ENCODE measurements at regions of chr1 and their contacts with region 1.

Region 1: DNA sequence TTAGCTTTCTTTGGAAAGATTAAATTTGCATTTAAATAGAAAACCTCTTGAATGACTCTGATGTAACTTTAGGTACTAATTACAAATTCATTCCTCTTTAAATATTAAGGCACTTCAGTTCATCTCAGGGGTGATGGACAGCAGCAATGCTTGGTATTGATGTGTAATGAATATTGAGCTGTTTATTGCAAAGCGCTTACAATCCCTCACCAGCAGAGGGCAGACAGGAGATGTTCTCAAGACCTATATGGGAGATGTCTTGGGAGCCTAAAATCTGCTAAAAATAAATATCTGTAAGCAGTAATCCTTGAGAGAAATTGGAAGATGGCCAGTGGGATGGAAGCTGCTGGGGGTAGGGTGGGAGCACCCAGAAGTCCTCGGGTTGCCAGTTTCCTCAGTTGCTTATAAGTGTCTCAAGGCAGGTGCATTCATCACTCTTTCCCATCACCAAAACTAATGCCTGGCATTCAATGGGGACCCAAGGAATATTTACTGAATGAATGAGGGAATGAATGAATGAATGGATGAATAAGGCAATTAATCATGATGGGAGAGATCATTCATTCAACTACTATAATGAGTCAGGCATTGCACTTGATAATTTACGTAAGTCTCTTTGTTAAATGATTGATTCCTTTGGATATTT is 2.3 kb downstream of the KLHDC8A start:
- DNase-seq: peak in 1 of 2 experiments; percentile 69
- H3K4me3 ChIP-seq: no peak overlapping the region
- H3K27ac ChIP-seq: no peak overlapping the region
- H3K4me1 ChIP-seq: peaks cover 22 to 47% (median 31%) of the 10 kb centered on the region in 4 experiments
- H3K27me3 ChIP-seq: no peaks in the 10 kb centered on the region
- CTCF ChIP-seq: peak in 2 of 3 experiments; percentile 75 to 84; a peak in 3 of 4 replicates
- EP300 ChIP-seq: no peak
- POLR2A ChIP-seq: no peak
- RAD21 ChIP-seq: peak; percentile 56 to 66

Region 2: DNA sequence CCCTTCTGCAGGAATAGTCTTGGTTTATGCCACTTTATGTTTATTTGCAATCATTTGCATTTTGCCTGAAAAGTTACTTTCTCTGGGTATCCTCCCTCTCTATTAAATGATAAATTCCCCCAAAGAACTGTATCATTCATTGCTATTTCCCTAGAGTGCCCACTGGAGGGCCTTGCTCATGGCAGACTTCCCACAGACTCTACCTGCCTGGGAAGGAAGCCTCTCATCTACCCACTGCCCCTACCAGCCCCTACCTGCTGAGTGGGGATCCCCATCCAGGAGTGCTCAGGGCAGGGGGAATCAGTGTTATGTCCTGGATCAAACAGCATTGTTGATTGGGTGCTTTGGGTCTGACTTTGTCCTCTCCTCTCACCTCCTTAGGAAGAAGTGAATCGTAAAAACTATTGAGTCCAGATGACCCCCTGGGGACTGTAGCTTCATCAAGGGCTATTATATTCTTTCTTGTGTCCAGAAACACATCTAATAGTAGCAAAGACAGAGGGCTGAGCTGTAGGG is 662.0 kb before region 1 on chr1:
- CTCF ChIA-PET with region 1: no interaction called
- POLR2A ChIA-PET with region 1: no interaction called
- DNase-seq: peak in 1 of 2 experiments; percentile 53
- H3K4me3 ChIP-seq: peak overlapping the region in 1 of 4 experiments; percentile 12; a peak in 1 of 8 replicates
- H3K27ac ChIP-seq: no peak overlapping the region
- H3K4me1 ChIP-seq: peaks cover 1 to 4% (median 2%) of the 10 kb centered on the region in 4 experiments; a peak in 5 of 7 replicates
- H3K27me3 ChIP-seq: peaks cover 0 to 5% (median 5%) of the 10 kb centered on the region in 4 experiments; a peak in 3 of 7 replicates
- CTCF ChIP-seq: peak; percentile 5 to 30 (median 23)
- EP300 ChIP-seq: no peak
- POLR2A ChIP-seq: no peak
- RAD21 ChIP-seq: peak; percentile 41 to 54; a peak in 3 of 4 replicates

Region 3: DNA sequence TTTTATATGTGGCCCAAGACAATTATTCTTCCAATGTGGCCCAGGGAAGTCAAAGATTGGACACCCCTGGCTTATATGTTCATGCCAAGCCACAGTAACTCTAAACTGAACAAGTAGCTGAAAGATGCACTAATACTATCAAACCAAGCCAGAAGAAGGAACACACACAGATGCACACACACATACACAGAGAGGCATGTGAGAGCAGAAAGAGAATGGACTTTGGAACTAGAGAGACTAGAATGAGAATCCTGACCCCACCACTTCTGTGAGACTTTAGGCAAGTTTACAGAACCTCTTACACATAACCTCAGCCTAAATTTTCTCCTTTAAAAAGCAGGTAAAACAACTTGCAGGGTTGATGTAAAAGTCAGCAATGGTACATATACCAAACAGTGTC is 259.0 kb before region 1 on chr1:
- CTCF ChIA-PET with region 1: no interaction called
- POLR2A ChIA-PET with region 1: no interaction called
- DNase-seq: no peak
- H3K4me3 ChIP-seq: no peak overlapping the region
- H3K27ac ChIP-seq: no peak overlapping the region
- H3K4me1 ChIP-seq: no peaks in the 10 kb centered on the region
- H3K27me3 ChIP-seq: no peaks in the 10 kb centered on the region
- CTCF ChIP-seq: no peak
- EP300 ChIP-seq: no peak
- POLR2A ChIP-seq: no peak
- RAD21 ChIP-seq: no peak

Region 4: DNA sequence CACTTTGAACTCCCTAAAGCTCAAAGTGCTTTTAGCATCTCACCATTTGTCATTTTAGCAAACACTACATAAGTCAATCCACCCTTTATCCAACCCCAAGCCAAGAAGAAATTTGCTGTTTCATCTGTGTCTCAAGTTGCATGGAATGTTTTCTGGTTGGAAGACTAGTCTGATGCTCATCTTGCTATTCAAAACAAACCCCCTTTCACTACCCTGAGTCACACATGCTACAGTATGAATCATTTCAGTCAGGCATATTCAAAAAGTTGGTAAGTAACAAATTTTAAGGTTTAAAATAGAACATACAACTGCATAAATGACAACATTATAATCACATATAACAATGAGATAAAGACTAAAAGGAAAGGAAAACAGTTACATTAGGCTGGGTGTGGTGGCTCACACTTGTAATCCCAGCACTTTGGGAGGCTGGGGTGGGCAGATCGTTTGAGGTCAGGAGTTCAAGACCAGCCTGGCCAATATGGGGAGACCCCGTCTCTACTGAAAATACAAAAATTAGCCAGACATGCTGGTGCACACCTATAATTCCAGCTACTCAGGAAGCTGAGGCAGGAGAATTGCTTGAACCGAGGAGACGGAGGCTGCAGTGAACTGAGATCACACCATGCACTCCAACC is 181.5 kb before region 1 on chr1:
- CTCF ChIA-PET with region 1: no interaction called
- POLR2A ChIA-PET with region 1: no interaction called
- DNase-seq: no peak
- H3K4me3 ChIP-seq: no peak overlapping the region
- H3K27ac ChIP-seq: no peak overlapping the region
- H3K4me1 ChIP-seq: no peaks in the 10 kb centered on the region
- H3K27me3 ChIP-seq: no peaks in the 10 kb centered on the region
- CTCF ChIP-seq: no peak
- EP300 ChIP-seq: no peak
- POLR2A ChIP-seq: no peak
- RAD21 ChIP-seq: no peak

Region 5: GRCh38 chr1:205304695-205305070 is 49.7 kb before region 1 on chr1:
- CTCF ChIA-PET with region 1: no interaction called
- POLR2A ChIA-PET with region 1: no interaction called
- DNase-seq: no peak
- H3K4me3 ChIP-seq: no peak overlapping the region
- H3K27ac ChIP-seq: no peak overlapping the region
- H3K4me1 ChIP-seq: peaks cover 11 to 27% (median 22%) of the 10 kb centered on the region in 4 experiments
- H3K27me3 ChIP-seq: no peaks in the 10 kb centered on the region
- CTCF ChIP-seq: no peak
- EP300 ChIP-seq: no peak
- POLR2A ChIP-seq: no peak
- RAD21 ChIP-seq: no peak

Region 6: DNA sequence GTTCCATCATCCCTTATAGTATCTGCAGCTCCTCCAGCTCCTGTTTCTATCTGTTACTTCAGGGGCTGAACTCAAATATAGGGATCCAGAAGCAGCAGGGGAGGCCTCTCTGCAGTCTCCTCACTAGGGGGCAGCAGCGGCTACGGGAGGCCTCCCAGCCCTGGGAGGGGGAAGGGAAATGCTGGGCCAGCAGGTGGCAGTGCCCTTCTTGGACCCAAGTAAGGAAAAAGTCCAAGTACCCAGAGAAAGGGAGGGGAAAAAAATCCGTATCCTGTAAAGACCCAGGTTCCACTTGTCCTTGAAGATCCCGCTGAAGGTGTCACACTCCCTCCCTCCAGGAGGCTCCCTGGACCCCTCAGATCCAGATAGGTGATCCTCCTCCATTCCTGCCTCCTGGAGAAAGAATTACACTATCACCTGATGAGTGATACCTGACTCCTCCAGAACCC is 18.7 kb before region 1 on chr1:
- CTCF ChIA-PET with region 1: interaction called, 80 read pairs
- POLR2A ChIA-PET with region 1: interaction called, 3 read pairs
- DNase-seq: peak; percentile 78 to 91
- H3K4me3 ChIP-seq: no peak overlapping the region
- H3K27ac ChIP-seq: no peak overlapping the region
- H3K4me1 ChIP-seq: peaks cover 0 to 3% (median under 1%) of the 10 kb centered on the region in 4 experiments; a peak in 4 of 7 replicates
- H3K27me3 ChIP-seq: no peaks in the 10 kb centered on the region; a peak in 3 of 7 replicates
- CTCF ChIP-seq: peak; percentile 93 to 99 (median 94)
- EP300 ChIP-seq: no peak
- POLR2A ChIP-seq: no peak
- RAD21 ChIP-seq: peak; percentile 78 to 89

Region 7: DNA sequence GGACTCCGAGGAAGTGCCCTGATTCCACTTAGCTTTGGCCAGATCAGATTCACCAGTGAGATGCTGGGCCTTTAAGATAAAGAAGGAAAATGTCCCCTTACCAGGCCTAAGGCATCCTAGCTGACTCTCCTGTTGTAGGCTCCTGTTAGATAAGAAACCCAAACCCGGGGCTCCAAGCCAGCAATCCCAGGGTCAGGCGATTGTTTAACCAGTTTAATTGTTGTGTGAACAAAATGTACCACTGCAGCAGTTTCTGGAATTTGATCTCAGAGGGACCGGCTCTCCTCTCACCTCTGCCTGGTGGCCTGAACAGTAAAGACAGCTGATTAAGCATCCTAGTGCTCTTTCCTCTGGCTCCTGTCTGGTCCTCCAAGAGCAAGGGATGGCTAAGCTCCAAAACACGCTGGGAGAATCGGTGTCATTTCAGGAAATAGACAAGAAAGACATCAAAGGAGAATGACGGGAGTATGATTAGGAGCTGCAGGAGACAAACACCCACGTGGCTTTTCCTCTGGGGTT is 11.6 kb after region 1 on chr1:
- CTCF ChIA-PET with region 1: interaction called, 207 read pairs
- POLR2A ChIA-PET with region 1: interaction called, 4 read pairs
- DNase-seq: no peak
- H3K4me3 ChIP-seq: no peak overlapping the region
- H3K27ac ChIP-seq: no peak overlapping the region
- H3K4me1 ChIP-seq: no peaks in the 10 kb centered on the region
- H3K27me3 ChIP-seq: 0 out of 7 replicates have a peak, but pooled peaks cover 0 to 2% (median 0%) of the 10 kb centered on the region in 4 experiments
- CTCF ChIP-seq: no peak
- EP300 ChIP-seq: no peak
- POLR2A ChIP-seq: no peak
- RAD21 ChIP-seq: no peak

Region 8: GRCh38 chr1:205382561-205382960 is 28.2 kb after region 1 on chr1:
- CTCF ChIA-PET with region 1: interaction called, 207 read pairs
- POLR2A ChIA-PET with region 1: no interaction called
- DNase-seq: peak in 1 of 2 experiments; percentile 44
- H3K4me3 ChIP-seq: no peak overlapping the region
- H3K27ac ChIP-seq: no peak overlapping the region
- H3K4me1 ChIP-seq: peaks cover 0 to 3% (median 0%) of the 10 kb centered on the region in 4 experiments; a peak in 1 of 7 replicates
- H3K27me3 ChIP-seq: no peaks in the 10 kb centered on the region
- CTCF ChIP-seq: no peak
- EP300 ChIP-seq: no peak
- POLR2A ChIP-seq: no peak
- RAD21 ChIP-seq: no peak

Region 9: GRCh38 chr1:205416322-205416721 is 61.9 kb after region 1 on chr1:
- CTCF ChIA-PET with region 1: interaction called, 10 read pairs
- POLR2A ChIA-PET with region 1: no interaction called
- DNase-seq: no peak
- H3K4me3 ChIP-seq: no peak overlapping the region
- H3K27ac ChIP-seq: no peak overlapping the region
- H3K4me1 ChIP-seq: no peaks in the 10 kb centered on the region
- H3K27me3 ChIP-seq: no peaks in the 10 kb centered on the region
- CTCF ChIP-seq: no peak
- EP300 ChIP-seq: no peak
- POLR2A ChIP-seq: no peak
- RAD21 ChIP-seq: no peak

Region 10: GRCh38 chr1:205440476-205441317 is 86.3 kb after region 1 on chr1:
- CTCF ChIA-PET with region 1: interaction called, 13 read pairs
- POLR2A ChIA-PET with region 1: interaction called, 3 read pairs
- DNase-seq: peak in 1 of 2 experiments; percentile 65
- H3K4me3 ChIP-seq: no peak overlapping the region
- H3K27ac ChIP-seq: no peak overlapping the region
- H3K4me1 ChIP-seq: peaks cover 40 to 69% (median 53%) of the 10 kb centered on the region in 4 experiments
- H3K27me3 ChIP-seq: peaks cover 0 to 10% (median 4%) of the 10 kb centered on the region in 4 experiments; a peak in 1 of 7 replicates
- CTCF ChIP-seq: no peak
- EP300 ChIP-seq: no peak
- POLR2A ChIP-seq: 0 out of 3 replicates have a peak, but pooled peaks of 1 of the 2 experiments have one; percentile 17
- RAD21 ChIP-seq: no peak